ENCODE measurements at regions of chr4 and their contacts with region 1.

Region 1: DNA sequence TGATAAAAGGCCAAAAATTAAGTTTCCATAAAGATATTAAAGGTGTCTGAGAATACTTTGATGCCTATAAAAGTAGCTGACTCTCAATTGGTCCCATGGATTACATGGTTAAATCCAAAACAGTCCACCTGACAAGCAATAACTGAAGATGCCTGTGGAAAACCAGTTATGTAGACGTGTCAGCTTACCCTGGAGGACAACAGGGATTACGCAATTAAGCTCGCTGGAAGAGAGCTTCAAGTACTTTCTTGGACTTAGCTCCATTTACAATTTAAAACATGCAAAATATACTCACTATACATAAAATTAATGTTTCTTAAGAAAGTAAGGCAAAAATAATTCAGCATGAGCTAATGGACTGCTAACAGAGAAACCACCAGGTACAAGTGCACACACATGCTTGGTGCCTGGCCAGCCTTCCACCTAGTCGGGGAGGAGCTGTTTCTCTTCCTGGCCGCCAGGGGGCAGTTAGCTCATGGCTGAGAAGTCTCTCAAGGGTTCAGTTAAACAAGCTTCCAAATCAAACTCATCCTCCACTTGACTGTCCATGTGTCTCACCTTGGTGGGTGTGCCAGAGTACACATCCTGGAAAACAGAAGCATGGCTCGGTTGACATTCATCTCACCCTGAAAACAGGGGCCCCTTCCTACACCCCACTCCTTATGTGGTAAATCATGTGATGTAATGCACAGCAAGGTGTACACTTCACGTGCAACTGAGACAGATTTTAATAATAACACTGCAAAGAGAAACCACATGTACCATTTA is 9.2 kb upstream of the FAM53A start:
- DNase-seq: peak; percentile 48 to 88 (median 82)
- ATAC-seq: peak; percentile 96
- H3K4me3 ChIP-seq: no peak overlapping the region
- H3K4me3 Mint-ChIP-seq: no peak overlapping the region
- H3K27ac ChIP-seq: no peak overlapping the region
- H3K27ac Mint-ChIP-seq: peak overlapping the region; percentile 7
- H3K4me1 ChIP-seq: no peaks in the 10 kb centered on the region
- H3K4me1 Mint-ChIP-seq: peaks cover 4% of the 10 kb centered on the region
- H3K27me3 ChIP-seq: no peaks in the 10 kb centered on the region
- H3K27me3 Mint-ChIP-seq: no peaks in the 10 kb centered on the region
- CTCF ChIP-seq: peak; percentile 83

Region 2: GRCh38 chr4:1712216-1713002 is 19.1 kb after region 1 on chr4 and contains the start of gene SLBP:
- CTCF ChIA-PET with region 1: interaction called, 509 read pairs
- POLR2A ChIA-PET with region 1: interaction called, 16 read pairs
- intact Hi-C with region 1: loop called (anchors 1 kb)
- DNase-seq: peak; percentile 96 to 99 (median 99)
- ATAC-seq: peak; percentile 87
- H3K4me3 ChIP-seq: peak within 1 kb of the TSS; percentile 82 to 95
- H3K4me3 Mint-ChIP-seq: peak within 1 kb of the TSS; percentile 94
- H3K27ac ChIP-seq: peak within 1 kb of the TSS; percentile 95 to 97
- H3K27ac Mint-ChIP-seq: peak within 1 kb of the TSS; percentile 94
- H3K4me1 ChIP-seq: peaks cover 42% of the 10 kb centered on the region
- H3K4me1 Mint-ChIP-seq: peaks cover 60% of the 10 kb centered on the region
- H3K27me3 ChIP-seq: no peaks in the 10 kb centered on the region
- H3K27me3 Mint-ChIP-seq: no peaks in the 10 kb centered on the region
- CTCF ChIP-seq: no peak
- total RNA-seq, gene SLBP: 61.2 to 62.6 TPM

Region 3: DNA sequence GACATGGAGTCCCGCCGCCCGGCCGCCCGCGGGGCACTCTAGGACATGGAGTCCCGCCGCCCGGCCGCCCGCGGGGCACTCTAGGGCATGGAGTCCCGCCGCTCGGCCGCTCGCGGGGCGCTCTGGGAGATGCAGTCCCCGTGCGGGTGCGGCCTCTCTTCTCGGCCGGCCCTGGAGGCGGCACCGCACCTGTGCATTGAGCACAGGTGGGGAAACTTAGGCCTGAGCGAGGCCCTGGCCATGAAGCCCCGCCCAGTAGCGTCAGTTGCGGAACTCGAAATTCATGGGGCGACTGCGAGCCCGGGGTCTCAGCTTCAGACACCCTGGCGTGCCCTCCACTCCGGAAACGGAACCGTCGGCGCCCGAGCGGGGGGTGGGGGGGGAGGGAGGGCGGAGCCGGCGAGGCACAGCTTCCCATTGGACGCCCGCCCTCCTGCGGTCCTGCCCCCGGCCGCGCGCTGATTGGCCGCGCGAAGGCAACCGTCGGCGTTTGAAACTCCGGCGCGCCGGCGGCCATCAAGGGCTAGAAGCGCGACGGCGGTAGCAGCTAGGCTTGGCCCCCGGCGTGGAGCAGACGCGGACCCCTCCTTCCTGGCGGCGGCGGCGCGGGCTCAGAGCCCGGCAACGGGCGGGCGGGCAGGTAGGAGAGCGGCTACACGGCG is 27.8 kb after region 1 on chr4 and contains the starts of genes TACC3 and TMEM129:
- CTCF ChIA-PET with region 1: interaction called, 509 read pairs
- POLR2A ChIA-PET with region 1: interaction called, 20 read pairs
- intact Hi-C with region 1: loop called (anchors 1 kb)
- DNase-seq: peak; percentile 89 to 98 (median 94)
- ATAC-seq: peak; percentile 82
- H3K4me3 ChIP-seq: peak within 1 kb of the TSS; percentile 54 to 74
- H3K4me3 Mint-ChIP-seq: peak within 1 kb of the TSS; percentile 86
- H3K27ac ChIP-seq: peak within 1 kb of the TSS; percentile 85 to 86
- H3K27ac Mint-ChIP-seq: peak within 1 kb of the TSS; percentile 100
- H3K4me1 ChIP-seq: peaks cover 56% of the 10 kb centered on the region
- H3K4me1 Mint-ChIP-seq: peaks cover 49% of the 10 kb centered on the region
- H3K27me3 ChIP-seq: no peaks in the 10 kb centered on the region
- H3K27me3 Mint-ChIP-seq: no peaks in the 10 kb centered on the region
- CTCF ChIP-seq: no peak
- total RNA-seq, gene TACC3: 131 to 137 TPM
- total RNA-seq, gene TMEM129: 14.5 to 14.8 TPM

Region 4: GRCh38 chr4:1726146-1726934 is 33.0 kb after region 1 on chr4:
- CTCF ChIA-PET with region 1: interaction called, 509 read pairs
- POLR2A ChIA-PET with region 1: interaction called, 20 read pairs
- intact Hi-C with region 1: loop called (anchors 1 kb)
- DNase-seq: peak; percentile 82 to 96 (median 88)
- ATAC-seq: peak; percentile 32
- H3K4me3 ChIP-seq: no peak overlapping the region
- H3K4me3 Mint-ChIP-seq: peak overlapping the region; percentile 50
- H3K27ac ChIP-seq: no peak overlapping the region
- H3K27ac Mint-ChIP-seq: peak overlapping the region; percentile 80
- H3K4me1 ChIP-seq: peaks cover 58% of the 10 kb centered on the region
- H3K4me1 Mint-ChIP-seq: peaks cover 61% of the 10 kb centered on the region
- H3K27me3 ChIP-seq: no peaks in the 10 kb centered on the region
- H3K27me3 Mint-ChIP-seq: no peaks in the 10 kb centered on the region
- CTCF ChIP-seq: peak; percentile 93

Region 5: DNA sequence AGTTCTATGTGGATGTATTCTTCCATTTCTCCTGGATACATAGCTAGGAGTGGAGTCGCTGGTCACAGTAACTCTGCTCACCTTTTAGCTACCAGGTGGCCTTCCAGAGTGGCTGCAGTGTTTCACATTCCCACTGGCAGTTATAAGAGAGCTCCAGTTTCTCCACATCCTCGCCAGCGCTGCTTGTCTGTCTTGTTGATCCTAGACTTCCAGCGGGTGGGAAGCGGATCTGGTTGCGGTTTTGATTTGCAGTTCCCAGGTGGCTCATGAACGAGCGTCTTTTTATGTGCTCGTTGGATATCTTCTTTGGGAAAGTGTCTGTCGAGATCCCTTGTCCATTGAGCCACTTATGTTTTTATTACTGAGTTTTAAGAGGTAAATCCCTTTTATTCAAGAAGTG is 39.6 kb after region 1 on chr4:
- CTCF ChIA-PET with region 1: interaction called, 509 read pairs
- POLR2A ChIA-PET with region 1: interaction called, 11 read pairs
- intact Hi-C with region 1: no loop called
- DNase-seq: no peak
- ATAC-seq: no peak
- H3K4me3 ChIP-seq: no peak overlapping the region
- H3K4me3 Mint-ChIP-seq: no peak overlapping the region
- H3K27ac ChIP-seq: no peak overlapping the region
- H3K27ac Mint-ChIP-seq: peak overlapping the region; percentile 10
- H3K4me1 ChIP-seq: no peaks in the 10 kb centered on the region
- H3K4me1 Mint-ChIP-seq: peaks cover 14% of the 10 kb centered on the region
- H3K27me3 ChIP-seq: no peaks in the 10 kb centered on the region
- H3K27me3 Mint-ChIP-seq: no peaks in the 10 kb centered on the region
- CTCF ChIP-seq: no peak

Region 6: GRCh38 chr4:1746265-1746691 is 53.0 kb after region 1 on chr4:
- CTCF ChIA-PET with region 1: interaction called, 14 read pairs
- POLR2A ChIA-PET with region 1: interaction called, 3 read pairs
- intact Hi-C with region 1: no loop called
- DNase-seq: peak; percentile 62 to 84 (median 78)
- ATAC-seq: peak; percentile 76
- H3K4me3 ChIP-seq: no peak overlapping the region
- H3K4me3 Mint-ChIP-seq: no peak overlapping the region
- H3K27ac ChIP-seq: no peak overlapping the region
- H3K27ac Mint-ChIP-seq: no peak overlapping the region
- H3K4me1 ChIP-seq: peaks cover 5% of the 10 kb centered on the region
- H3K4me1 Mint-ChIP-seq: no peaks in the 10 kb centered on the region
- H3K27me3 ChIP-seq: no peaks in the 10 kb centered on the region
- H3K27me3 Mint-ChIP-seq: peaks cover 3% of the 10 kb centered on the region
- CTCF ChIP-seq: peak; percentile 58

Region 7: GRCh38 chr4:1809754-1810511 is 116.6 kb after region 1 on chr4:
- CTCF ChIA-PET with region 1: interaction called, 15 read pairs
- POLR2A ChIA-PET with region 1: no interaction called
- intact Hi-C with region 1: loop called (anchors 2 to 5 kb)
- DNase-seq: peak; percentile 35 to 75 (median 61)
- ATAC-seq: peak; percentile 71
- H3K4me3 ChIP-seq: no peak overlapping the region
- H3K4me3 Mint-ChIP-seq: no peak overlapping the region
- H3K27ac ChIP-seq: no peak overlapping the region
- H3K27ac Mint-ChIP-seq: no peak overlapping the region
- H3K4me1 ChIP-seq: no peaks in the 10 kb centered on the region
- H3K4me1 Mint-ChIP-seq: no peaks in the 10 kb centered on the region
- H3K27me3 ChIP-seq: no peaks in the 10 kb centered on the region
- H3K27me3 Mint-ChIP-seq: no peaks in the 10 kb centered on the region
- CTCF ChIP-seq: peak; percentile 72